Spleen (tissue), 13 donors: ENCODE measurements at regions of chr4 and their contacts with region 1.

Region 1: GRCh38 chr4:54050214-54050904 is 14.0 kb downstream of the CHIC2 start:
- DNase-seq: no peak
- H3K4me3 ChIP-seq: no peak overlapping the region
- H3K27ac ChIP-seq: no peak overlapping the region
- H3K4me1 ChIP-seq: peaks cover 11 to 73% (median 56%) of the 10 kb centered on the region in 6 donors
- H3K27me3 ChIP-seq: no peaks in the 10 kb centered on the region
- CTCF ChIP-seq: no peak
- POLR2A ChIP-seq: no peak

Region 2: GRCh38 chr4:53551958-53552357 is 498.4 kb before region 1 on chr4:
- intact Hi-C with region 1: no loop called
- DNase-seq: no peak
- H3K4me3 ChIP-seq: no peak overlapping the region
- H3K27ac ChIP-seq: no peak overlapping the region
- H3K4me1 ChIP-seq: peaks cover 0 to 5% (median 0%) of the 10 kb centered on the region in 6 donors
- H3K27me3 ChIP-seq: no peaks in the 10 kb centered on the region
- CTCF ChIP-seq: no peak
- POLR2A ChIP-seq: no peak

Region 3: DNA sequence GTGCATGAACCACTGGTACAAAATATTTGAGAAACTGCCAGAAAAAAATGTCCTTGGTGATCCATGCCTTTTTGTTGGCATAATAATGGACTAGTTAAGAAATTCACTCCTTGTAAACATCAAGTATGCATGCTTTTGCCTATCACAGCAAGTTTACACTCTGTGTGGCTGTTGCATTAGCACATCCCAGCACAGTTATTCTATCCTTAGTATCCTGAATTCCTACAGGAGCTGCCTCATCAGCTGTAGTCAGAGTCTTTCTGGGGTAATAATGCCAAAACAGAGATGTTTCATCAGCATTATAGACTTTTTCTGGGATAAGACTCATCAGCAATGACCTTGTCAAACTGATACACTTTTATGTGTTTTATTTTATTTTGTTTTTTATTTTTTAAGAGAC is 68.8 kb before region 1 on chr4:
- intact Hi-C with region 1: no loop called
- DNase-seq: no peak
- H3K4me3 ChIP-seq: no peak overlapping the region
- H3K27ac ChIP-seq: no peak overlapping the region
- H3K4me1 ChIP-seq: no peaks in the 10 kb centered on the region
- H3K27me3 ChIP-seq: no peaks in the 10 kb centered on the region
- CTCF ChIP-seq: no peak
- POLR2A ChIP-seq: no peak

Region 4: GRCh38 chr4:53997901-53998300 is 52.5 kb before region 1 on chr4:
- intact Hi-C with region 1: loop called (anchors 10 kb)
- DNase-seq: no peak
- H3K4me3 ChIP-seq: no peak overlapping the region
- H3K27ac ChIP-seq: no peak overlapping the region
- H3K4me1 ChIP-seq: peaks cover 0 to 27% (median 13%) of the 10 kb centered on the region in 6 donors
- H3K27me3 ChIP-seq: no peaks in the 10 kb centered on the region
- CTCF ChIP-seq: no peak
- POLR2A ChIP-seq: no peak